ENCODE measurements at regions of chr1 and their contacts with region 1.

Region 1: GRCh38 chr1:19918057-19918456 is 5.4 kb downstream of the PLA2G2E start:
- DNase-seq: no peak
- H3K4me3 ChIP-seq: no peak overlapping the region
- H3K27ac ChIP-seq: no peak overlapping the region
- H3K4me1 ChIP-seq: no peaks in the 10 kb centered on the region
- H3K27me3 ChIP-seq: peaks cover 0 to 9% (median 0%) of the 10 kb centered on the region in 4 donors
- CTCF ChIP-seq: peak; percentile 85 to 95 (median 88)
- POLR2A ChIP-seq: no peak

Region 2: GRCh38 chr1:19436716-19437476 is 481.2 kb before region 1 on chr1:
- intact Hi-C with region 1: no loop called
- DNase-seq: no peak
- H3K4me3 ChIP-seq: peak overlapping the region in 1 of 4 donors; percentile 3
- H3K27ac ChIP-seq: peak overlapping the region; percentile 78 to 92 (median 90)
- H3K4me1 ChIP-seq: peaks cover 70 to 100% (median 90%) of the 10 kb centered on the region in 3 donors
- H3K27me3 ChIP-seq: no peaks in the 10 kb centered on the region
- CTCF ChIP-seq: no peak
- POLR2A ChIP-seq: peak in 1 of 4 donors; percentile 21

Region 3: DNA sequence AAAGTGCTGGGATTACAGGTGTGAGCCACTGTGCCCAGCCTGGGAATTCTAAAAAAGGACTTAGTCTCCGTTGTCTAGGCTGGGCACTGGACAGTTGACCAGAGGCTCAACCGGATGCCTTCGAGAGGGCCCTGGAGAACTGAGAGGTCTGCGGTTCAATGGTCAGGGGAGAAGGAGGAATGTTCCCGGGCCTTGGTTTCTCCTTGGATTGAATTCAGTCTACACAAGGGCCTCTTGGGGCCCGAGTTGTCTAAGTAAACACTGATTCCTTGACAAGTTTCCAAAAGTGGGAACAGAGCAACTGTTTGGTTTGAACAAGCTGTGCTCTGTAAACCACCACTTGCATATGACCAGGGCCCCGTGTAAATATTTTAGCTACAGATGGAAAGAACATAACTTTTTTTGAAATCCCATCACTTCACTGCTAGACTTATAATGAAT is 403.6 kb before region 1 on chr1:
- intact Hi-C with region 1: no loop called
- DNase-seq: no peak
- H3K4me3 ChIP-seq: no peak overlapping the region
- H3K27ac ChIP-seq: peak overlapping the region; percentile 28 to 84 (median 80)
- H3K4me1 ChIP-seq: peaks cover 0 to 22% (median 0%) of the 10 kb centered on the region in 3 donors
- H3K27me3 ChIP-seq: no peaks in the 10 kb centered on the region
- CTCF ChIP-seq: no peak
- POLR2A ChIP-seq: no peak

Region 4: DNA sequence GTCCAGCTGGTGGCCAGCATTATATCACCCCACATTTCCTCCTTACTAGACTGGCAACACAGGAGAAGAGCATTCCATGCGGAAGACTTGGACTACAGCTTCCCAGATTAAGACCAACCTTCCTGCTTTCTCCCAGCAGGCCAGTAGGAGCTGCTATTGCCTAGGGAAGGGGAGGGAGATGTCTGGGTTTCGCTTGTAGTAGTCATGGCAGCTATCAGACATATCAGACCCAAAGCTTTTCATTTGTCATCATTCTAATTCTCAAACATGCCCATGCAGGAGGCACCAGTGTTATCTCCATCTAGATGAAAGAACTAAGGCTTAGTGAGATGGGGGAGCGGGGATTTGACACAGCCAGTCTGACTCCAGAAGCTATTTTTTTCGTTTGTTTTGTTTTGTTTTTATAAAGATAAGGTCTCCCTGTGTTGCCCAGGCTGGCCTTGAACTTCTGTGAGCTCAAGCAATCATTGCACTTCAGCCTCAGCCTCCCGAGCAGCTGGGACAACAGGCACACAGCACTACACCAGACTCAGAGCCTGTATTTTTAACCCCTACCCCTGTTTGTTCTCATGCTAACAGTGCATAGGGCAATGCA is 56.9 kb after region 1 on chr1:
- intact Hi-C with region 1: no loop called
- DNase-seq: no peak
- H3K4me3 ChIP-seq: no peak overlapping the region
- H3K27ac ChIP-seq: no peak overlapping the region
- H3K4me1 ChIP-seq: peaks cover 0 to 4% (median 0%) of the 10 kb centered on the region in 3 donors
- H3K27me3 ChIP-seq: peaks cover 0 to 47% (median 0%) of the 10 kb centered on the region in 4 donors
- CTCF ChIP-seq: peak in 4 of 6 experiments; percentile 38 to 63 (median 51)
- POLR2A ChIP-seq: no peak

Region 5: GRCh38 chr1:20194757-20195461 is 276.9 kb after region 1 on chr1:
- intact Hi-C with region 1: loop called (anchors 5 kb)
- DNase-seq: no peak
- H3K4me3 ChIP-seq: peak overlapping the region in 1 of 4 donors; percentile 2
- H3K27ac ChIP-seq: no peak overlapping the region
- H3K4me1 ChIP-seq: peaks cover 5 to 36% (median 7%) of the 10 kb centered on the region in 3 donors
- H3K27me3 ChIP-seq: peaks cover 0 to 61% (median 0%) of the 10 kb centered on the region in 4 donors
- CTCF ChIP-seq: peak; percentile 48 to 87 (median 79)
- POLR2A ChIP-seq: no peak

Measured in esophagus squamous epithelium (tissue), 5 donors.